B cell (primary cell): ENCODE measurements at regions of chr9 and their contacts with region 1.

Region 1: DNA sequence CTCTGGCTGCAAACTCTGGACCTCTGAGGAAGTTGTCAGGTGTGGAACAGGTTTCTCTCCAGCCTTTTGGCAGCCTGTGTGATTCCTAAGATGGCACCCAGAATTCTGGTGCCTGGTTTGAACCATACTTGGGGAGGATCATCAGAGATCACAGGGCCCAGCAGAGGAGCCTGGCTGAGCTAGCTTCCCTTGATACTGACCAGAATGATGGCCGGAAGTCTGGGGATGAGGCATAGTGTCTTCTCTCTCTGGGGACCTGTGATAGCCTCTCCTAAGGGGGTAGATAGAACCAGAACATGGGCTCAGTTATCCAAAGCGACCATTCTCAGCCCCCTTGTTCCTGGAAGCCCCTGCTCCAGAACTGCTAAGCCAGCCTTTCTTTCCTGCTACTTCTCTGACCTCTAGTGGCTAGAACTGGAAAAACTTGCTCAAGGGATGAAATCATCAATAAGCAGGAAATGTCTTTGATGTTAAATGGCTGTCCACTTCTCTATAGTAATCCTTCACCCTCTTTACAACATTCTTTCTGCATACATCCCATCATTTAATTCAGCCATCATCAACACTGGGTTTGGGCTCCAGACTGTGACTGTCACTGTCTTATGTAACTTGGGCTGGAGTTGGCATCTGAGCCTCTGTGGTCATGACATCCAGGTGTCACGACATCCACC is 55.1 kb downstream of the C9orf152 start:
- DNase-seq: peak; percentile 76
- ATAC-seq: peak; percentile 32
- H3K4me3 ChIP-seq: peak overlapping the region in 1 of 5 experiments; percentile 2
- H3K4me3 Mint-ChIP-seq: peak overlapping the region; percentile 51
- H3K27ac ChIP-seq: peak overlapping the region; percentile 54 to 90
- H3K27ac Mint-ChIP-seq: peak overlapping the region; percentile 84
- H3K4me1 ChIP-seq: peaks cover 92% of the 10 kb centered on the region in 2 donors
- H3K4me1 Mint-ChIP-seq: peaks cover 97% of the 10 kb centered on the region
- H3K27me3 ChIP-seq: no peaks in the 10 kb centered on the region
- H3K27me3 Mint-ChIP-seq: no peaks in the 10 kb centered on the region
- CTCF ChIP-seq: peak; percentile 80

Region 2: DNA sequence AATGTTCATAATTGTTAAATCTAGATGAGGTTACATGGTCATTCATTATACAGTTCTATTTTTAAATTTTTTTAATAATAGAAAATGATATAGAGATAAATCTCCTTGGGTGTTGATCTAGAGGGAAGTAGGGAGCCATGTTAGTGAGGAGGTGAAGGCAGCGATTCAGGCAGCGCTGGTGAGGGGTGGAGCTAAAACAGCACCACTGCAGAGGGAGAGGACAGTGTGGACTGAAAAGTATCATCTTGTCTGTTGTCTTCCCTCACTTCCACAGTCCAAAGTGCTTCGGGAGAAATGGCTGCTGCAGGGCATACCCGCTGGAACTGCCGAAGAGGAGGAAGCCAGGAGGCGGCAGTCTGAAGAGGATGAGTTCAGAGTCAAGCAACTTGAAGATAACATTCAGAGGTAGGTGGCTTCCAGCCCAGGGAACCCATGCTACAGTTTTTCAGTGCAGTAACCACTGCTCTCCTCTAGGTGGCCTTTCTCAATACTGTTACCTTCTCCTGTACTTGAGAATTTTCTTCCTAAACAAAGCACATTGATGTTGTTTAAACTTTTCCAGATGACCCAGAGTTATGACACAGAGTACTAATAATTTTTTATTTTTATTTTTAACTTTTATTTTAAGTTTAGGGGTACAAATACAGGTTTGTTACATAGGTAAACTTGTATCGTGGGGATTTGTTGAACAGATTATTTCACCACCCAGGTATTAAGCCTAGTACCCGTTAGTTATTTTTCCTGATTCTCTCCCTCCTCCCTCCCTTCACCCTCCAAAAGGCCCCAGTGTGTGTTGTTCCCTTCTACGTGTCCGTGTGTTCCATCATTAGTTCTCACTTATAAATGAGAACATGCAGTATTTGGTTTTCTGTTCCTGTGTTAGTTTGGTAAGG is 272.3 kb before region 1 on chr9:
- CTCF ChIA-PET with region 1: interaction called, 7 read pairs
- POLR2A ChIA-PET with region 1: no interaction called
- intact Hi-C with region 1: loop called (anchors 1 kb)
- DNase-seq: peak; percentile 55
- ATAC-seq: peak; percentile 78
- H3K4me3 ChIP-seq: no peak overlapping the region
- H3K4me3 Mint-ChIP-seq: peak overlapping the region; percentile 37
- H3K27ac ChIP-seq: no peak overlapping the region
- H3K27ac Mint-ChIP-seq: no peak overlapping the region
- H3K4me1 ChIP-seq: peaks cover 0 to 3% of the 10 kb centered on the region in 2 donors
- H3K4me1 Mint-ChIP-seq: peaks cover 4% of the 10 kb centered on the region
- H3K27me3 ChIP-seq: peaks cover 0 to 4% (median 0%) of the 10 kb centered on the region in 4 experiments
- H3K27me3 Mint-ChIP-seq: peaks cover 23% of the 10 kb centered on the region
- CTCF ChIP-seq: peak; percentile 84

Region 3: GRCh38 chr9:110058304-110058953 is 94.4 kb before region 1 on chr9:
- CTCF ChIA-PET with region 1: interaction called, 19 read pairs
- POLR2A ChIA-PET with region 1: no interaction called
- intact Hi-C with region 1: loop called (anchors 5 kb)
- DNase-seq: peak; percentile 75
- ATAC-seq: peak; percentile 65
- H3K4me3 ChIP-seq: no peak overlapping the region
- H3K4me3 Mint-ChIP-seq: peak overlapping the region; percentile 68
- H3K27ac ChIP-seq: peak overlapping the region in 1 of 2 donors; percentile 45
- H3K27ac Mint-ChIP-seq: peak overlapping the region; percentile 80
- H3K4me1 ChIP-seq: peaks cover 57 to 70% of the 10 kb centered on the region in 2 donors
- H3K4me1 Mint-ChIP-seq: peaks cover 76% of the 10 kb centered on the region
- H3K27me3 ChIP-seq: no peaks in the 10 kb centered on the region
- H3K27me3 Mint-ChIP-seq: no peaks in the 10 kb centered on the region
- CTCF ChIP-seq: peak; percentile 77

Region 4: GRCh38 chr9:110099236-110100095 is 53.4 kb before region 1 on chr9:
- CTCF ChIA-PET with region 1: interaction called, 5 read pairs
- POLR2A ChIA-PET with region 1: no interaction called
- intact Hi-C with region 1: loop called (anchors 10 kb)
- DNase-seq: no peak
- ATAC-seq: no peak
- H3K4me3 ChIP-seq: no peak overlapping the region
- H3K4me3 Mint-ChIP-seq: no peak overlapping the region
- H3K27ac ChIP-seq: peak overlapping the region; percentile 1 to 66
- H3K27ac Mint-ChIP-seq: peak overlapping the region; percentile 20
- H3K4me1 ChIP-seq: peaks cover 59 to 62% of the 10 kb centered on the region in 2 donors
- H3K4me1 Mint-ChIP-seq: peaks cover 85% of the 10 kb centered on the region
- H3K27me3 ChIP-seq: no peaks in the 10 kb centered on the region
- H3K27me3 Mint-ChIP-seq: no peaks in the 10 kb centered on the region
- CTCF ChIP-seq: no peak

Region 5: GRCh38 chr9:110110154-110110553 is 42.7 kb before region 1 on chr9:
- CTCF ChIA-PET with region 1: interaction called, 4 read pairs
- POLR2A ChIA-PET with region 1: no interaction called
- intact Hi-C with region 1: loop called (anchors 5 kb)
- DNase-seq: peak; percentile 61
- ATAC-seq: peak; percentile 70
- H3K4me3 ChIP-seq: no peak overlapping the region
- H3K4me3 Mint-ChIP-seq: peak overlapping the region; percentile 52
- H3K27ac ChIP-seq: peak overlapping the region; percentile 38 to 84
- H3K27ac Mint-ChIP-seq: peak overlapping the region; percentile 74
- H3K4me1 ChIP-seq: peaks cover 73 to 82% of the 10 kb centered on the region in 2 donors
- H3K4me1 Mint-ChIP-seq: peaks cover 73% of the 10 kb centered on the region
- H3K27me3 ChIP-seq: no peaks in the 10 kb centered on the region
- H3K27me3 Mint-ChIP-seq: no peaks in the 10 kb centered on the region
- CTCF ChIP-seq: no peak

Region 6: GRCh38 chr9:110125207-110125751 is 27.6 kb before region 1 on chr9:
- CTCF ChIA-PET with region 1: interaction called, 20 read pairs
- POLR2A ChIA-PET with region 1: interaction called, 3 read pairs
- intact Hi-C with region 1: no loop called
- DNase-seq: no peak
- ATAC-seq: no peak
- H3K4me3 ChIP-seq: no peak overlapping the region
- H3K4me3 Mint-ChIP-seq: peak overlapping the region; percentile 71
- H3K27ac ChIP-seq: peak overlapping the region; percentile 90 to 94
- H3K27ac Mint-ChIP-seq: peak overlapping the region; percentile 89
- H3K4me1 ChIP-seq: peaks cover 84 to 92% of the 10 kb centered on the region in 2 donors
- H3K4me1 Mint-ChIP-seq: peaks cover 97% of the 10 kb centered on the region
- H3K27me3 ChIP-seq: no peaks in the 10 kb centered on the region
- H3K27me3 Mint-ChIP-seq: no peaks in the 10 kb centered on the region
- CTCF ChIP-seq: no peak